ENCODE measurements at regions of chr11 and their contacts with region 1.

Region 1: GRCh38 chr11:118171269-118172062 is 5.0 kb downstream of the SCN2B start:
- DNase-seq: peak; percentile 67
- H3K4me3 Mint-ChIP-seq: no peak overlapping the region
- H3K27ac Mint-ChIP-seq: no peak overlapping the region
- H3K4me1 Mint-ChIP-seq: peaks cover 18% of the 10 kb centered on the region
- H3K27me3 Mint-ChIP-seq: peaks cover 48% of the 10 kb centered on the region
- CTCF ChIP-seq: peak; percentile 69

Region 2: GRCh38 chr11:118145285-118146227 is 25.9 kb before region 1 on chr11:
- CTCF ChIA-PET with region 1: interaction called, 3 read pairs
- intact Hi-C with region 1: loop called (anchors 1 kb)
- DNase-seq: peak; percentile 91
- H3K4me3 Mint-ChIP-seq: peak overlapping the region; percentile 81
- H3K27ac Mint-ChIP-seq: no peak overlapping the region
- H3K4me1 Mint-ChIP-seq: peaks cover 9% of the 10 kb centered on the region
- H3K27me3 Mint-ChIP-seq: peaks cover 61% of the 10 kb centered on the region
- CTCF ChIP-seq: peak; percentile 73

Region 3: GRCh38 chr11:118156531-118157185 is 14.8 kb before region 1 on chr11:
- CTCF ChIA-PET with region 1: interaction called, 14 read pairs
- intact Hi-C with region 1: no loop called
- DNase-seq: peak; percentile 16
- H3K4me3 Mint-ChIP-seq: peak overlapping the region; percentile 41
- H3K27ac Mint-ChIP-seq: no peak overlapping the region
- H3K4me1 Mint-ChIP-seq: no peaks in the 10 kb centered on the region
- H3K27me3 Mint-ChIP-seq: peaks cover 93% of the 10 kb centered on the region
- CTCF ChIP-seq: no peak